A673 (cell line): ENCODE measurements at regions of chr9 and their contacts with region 1.

Region 1: DNA sequence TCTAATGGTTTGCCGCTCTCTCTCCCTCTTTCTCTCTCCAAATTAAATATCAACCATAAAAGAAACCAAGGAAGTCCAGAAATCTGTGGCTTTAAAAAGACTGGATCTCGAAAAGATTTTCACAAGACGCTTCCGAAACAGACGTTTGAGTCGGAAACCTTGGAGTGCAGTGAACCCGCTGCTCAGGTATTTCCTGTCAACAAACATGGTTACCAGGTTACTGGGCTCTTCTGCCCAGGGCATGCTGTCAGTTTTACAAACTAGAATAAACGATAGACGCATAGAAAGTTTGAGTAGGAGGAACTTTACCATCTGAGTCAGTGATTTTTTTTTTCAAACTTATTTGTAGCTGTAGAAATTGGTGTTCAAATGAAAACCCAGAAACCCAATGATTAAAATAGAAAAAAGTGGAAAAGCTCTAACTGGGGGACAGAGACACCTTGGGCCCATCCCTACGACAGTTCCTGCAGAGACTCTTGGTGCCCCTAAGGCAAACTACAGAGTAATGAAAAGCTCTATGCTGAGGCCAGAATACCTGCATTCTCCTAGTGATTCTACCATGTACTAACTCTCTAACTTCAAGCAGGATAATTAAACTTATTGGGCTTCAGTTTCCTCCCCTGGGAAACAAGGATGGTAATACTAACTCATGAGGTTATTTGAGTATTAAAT is 90.0 kb downstream of the DOCK8 start:
- DNase-seq: no peak
- H3K4me3 ChIP-seq: no peak overlapping the region
- H3K27ac ChIP-seq: no peak overlapping the region
- H3K4me1 ChIP-seq: no peaks in the 10 kb centered on the region
- H3K27me3 ChIP-seq: peaks cover 19% of the 10 kb centered on the region
- CTCF ChIP-seq: no peak

Region 2: DNA sequence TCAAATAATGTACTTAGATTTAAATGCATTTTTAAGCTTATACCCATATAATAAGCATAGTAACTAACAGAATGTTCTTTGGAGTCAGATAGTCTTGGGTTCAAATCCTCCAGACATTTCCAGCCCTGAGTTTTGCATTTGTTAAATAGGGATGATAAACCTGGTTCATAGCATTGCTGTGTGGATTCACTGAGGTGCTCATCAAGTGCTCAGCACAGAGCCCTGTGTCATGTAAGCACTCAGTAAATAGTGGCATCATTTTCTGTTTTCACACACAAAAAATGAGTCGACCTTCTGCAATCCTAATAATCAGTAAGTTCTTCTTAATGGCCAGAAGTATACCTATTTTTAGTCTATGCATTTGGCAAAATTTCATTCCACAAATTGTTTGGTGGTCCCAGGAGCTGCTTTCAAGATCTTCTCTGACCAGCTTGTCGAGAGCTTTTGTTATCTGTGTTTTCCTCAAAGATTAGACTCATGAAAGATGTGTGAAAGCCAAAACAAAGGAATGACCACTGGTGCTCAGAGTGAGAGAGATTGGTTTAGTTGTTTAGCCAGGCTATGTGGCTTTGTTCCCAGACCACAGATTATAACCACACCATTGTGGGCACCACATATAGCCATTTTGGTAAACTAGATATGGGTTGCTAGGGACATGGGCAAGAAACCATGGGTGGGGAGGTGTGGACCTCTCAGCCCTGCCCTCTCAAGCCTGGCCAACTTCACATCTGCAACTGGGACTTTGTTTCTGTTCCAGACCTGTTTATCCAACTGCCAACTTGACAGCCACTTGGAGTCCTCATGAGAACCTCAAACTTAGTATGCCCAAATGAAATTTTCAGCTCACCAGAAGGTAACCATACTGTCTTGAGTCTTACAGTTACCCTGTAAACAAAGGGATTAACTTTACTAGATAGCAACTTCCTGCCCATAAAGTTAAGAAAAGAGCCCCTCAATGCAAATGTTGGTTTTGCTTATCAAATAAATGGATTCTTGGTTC is 45.0 kb before region 1 on chr9:
- CTCF ChIA-PET with region 1: no interaction called
- POLR2A ChIA-PET with region 1: no interaction called
- intact Hi-C with region 1: loop called (anchors 5 kb)
- DNase-seq: no peak
- H3K4me3 ChIP-seq: no peak overlapping the region
- H3K27ac ChIP-seq: no peak overlapping the region
- H3K4me1 ChIP-seq: no peaks in the 10 kb centered on the region
- H3K27me3 ChIP-seq: peaks cover 50% of the 10 kb centered on the region
- CTCF ChIP-seq: no peak